ENCODE measurements at regions of chr4 and their contacts with region 1.

Region 1: GRCh38 chr4:173420324-173420752 is 21.4 kb upstream of the SCRG1 start:
- DNase-seq: no peak
- H3K4me3 ChIP-seq: no peak overlapping the region
- H3K27ac ChIP-seq: no peak overlapping the region
- H3K4me1 ChIP-seq: no peaks in the 10 kb centered on the region
- H3K27me3 ChIP-seq: no peaks in the 10 kb centered on the region
- CTCF ChIP-seq: peak; percentile 44

Region 2: DNA sequence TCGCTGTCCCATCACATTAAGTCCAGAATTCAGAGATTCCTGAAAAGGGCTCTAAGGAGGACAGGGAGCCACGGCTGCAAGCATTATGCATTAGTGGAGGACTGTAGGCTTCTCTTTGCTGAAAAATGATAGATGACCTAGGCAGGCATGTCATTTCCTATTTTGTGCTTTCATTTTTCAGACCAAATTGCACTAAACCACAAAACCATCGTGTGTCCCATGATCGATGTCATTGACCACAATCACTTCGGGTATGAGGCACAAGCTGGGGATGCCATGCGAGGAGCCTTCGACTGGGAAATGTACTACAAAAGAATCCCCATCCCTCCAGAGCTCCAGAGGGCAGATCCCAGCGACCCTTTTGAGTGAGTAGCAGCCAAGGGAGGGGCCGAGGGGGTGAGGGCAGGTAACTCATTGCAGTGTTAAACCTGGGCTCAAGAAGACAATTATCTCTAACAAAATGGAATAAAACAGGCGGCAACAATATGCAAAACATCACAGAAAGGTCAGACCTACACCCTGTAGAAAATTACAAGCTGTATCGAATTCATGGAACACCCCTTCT is 606.9 kb before region 1 on chr4:
- intact Hi-C with region 1: no loop called
- DNase-seq: no peak
- H3K4me3 ChIP-seq: no peak overlapping the region
- H3K27ac ChIP-seq: no peak overlapping the region
- H3K4me1 ChIP-seq: no peaks in the 10 kb centered on the region
- H3K27me3 ChIP-seq: no peaks in the 10 kb centered on the region
- CTCF ChIP-seq: no peak

Region 3: DNA sequence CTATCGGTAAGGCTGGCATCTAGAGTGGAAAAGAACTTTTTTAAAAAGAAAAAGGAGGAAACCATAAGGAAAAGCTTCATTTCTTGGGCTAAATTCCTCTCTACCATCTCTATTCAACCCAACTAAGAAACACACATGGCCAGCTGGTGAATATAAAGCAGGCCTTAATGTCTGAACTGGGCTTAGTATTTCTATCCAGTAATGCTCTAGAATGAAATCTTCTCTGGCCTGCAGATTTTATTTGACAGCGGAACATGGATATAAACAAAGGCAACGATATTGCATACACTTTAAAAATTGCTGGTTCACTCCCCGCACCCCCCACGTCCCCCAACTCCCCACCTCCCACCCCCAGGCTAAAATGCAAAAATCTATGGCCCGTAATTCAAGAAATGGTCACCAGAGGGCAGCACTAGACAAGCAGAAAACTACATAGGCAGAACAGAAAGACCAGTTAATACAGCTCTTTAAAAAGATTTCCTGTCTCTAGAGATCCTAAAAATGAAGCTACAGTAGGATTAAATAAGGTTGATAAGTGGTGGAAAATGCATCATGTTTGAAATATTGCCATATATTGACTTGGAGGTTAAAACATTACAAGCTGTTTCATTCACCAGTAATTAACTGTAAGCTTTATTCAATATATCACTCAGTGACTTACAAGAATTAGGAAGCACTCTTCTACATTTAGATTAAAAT is 407.0 kb before region 1 on chr4:
- intact Hi-C with region 1: loop called (anchors 5 kb)
- DNase-seq: peak; percentile 60
- H3K4me3 ChIP-seq: no peak overlapping the region
- H3K27ac ChIP-seq: no peak overlapping the region
- H3K4me1 ChIP-seq: no peaks in the 10 kb centered on the region
- H3K27me3 ChIP-seq: no peaks in the 10 kb centered on the region
- CTCF ChIP-seq: peak; percentile 75

Region 4: DNA sequence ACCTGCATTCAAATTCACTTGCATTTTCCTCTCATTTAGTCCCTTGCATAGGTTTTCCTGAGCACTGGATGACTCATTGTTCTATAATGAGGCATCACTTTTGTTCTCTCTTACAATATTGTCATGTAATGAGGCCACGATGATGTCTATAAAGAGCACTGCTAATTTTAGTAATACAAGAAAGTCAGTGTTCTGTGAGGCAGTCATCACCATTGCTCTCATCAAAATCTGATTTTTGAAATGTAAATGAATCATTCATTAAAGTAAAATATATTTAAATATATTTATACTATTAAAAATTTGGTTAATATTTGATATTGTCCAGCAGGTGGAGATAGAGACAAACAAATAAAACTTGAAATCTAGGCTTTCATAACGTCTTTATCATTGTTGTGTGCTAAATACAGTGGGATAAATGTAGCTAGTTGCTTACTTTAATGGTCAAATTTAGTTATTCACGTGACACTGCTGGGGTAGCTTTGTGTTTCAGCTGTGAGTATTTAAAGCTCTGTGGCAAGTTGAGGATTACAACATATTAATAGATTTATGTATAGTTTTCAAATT is 101.6 kb before region 1 on chr4:
- intact Hi-C with region 1: loop called (anchors 5 kb)
- DNase-seq: no peak
- H3K4me3 ChIP-seq: no peak overlapping the region
- H3K27ac ChIP-seq: no peak overlapping the region
- H3K4me1 ChIP-seq: no peaks in the 10 kb centered on the region
- H3K27me3 ChIP-seq: no peaks in the 10 kb centered on the region
- CTCF ChIP-seq: peak; percentile 21

Region 5: GRCh38 chr4:173334773-173335752 is 85.3 kb before region 1 on chr4:
- intact Hi-C with region 1: no loop called
- DNase-seq: peak; percentile 87
- H3K4me3 ChIP-seq: peak overlapping the region; percentile 91
- H3K27ac ChIP-seq: peak overlapping the region; percentile 100
- H3K4me1 ChIP-seq: no peaks in the 10 kb centered on the region
- H3K27me3 ChIP-seq: no peaks in the 10 kb centered on the region
- CTCF ChIP-seq: no peak

Region 6: DNA sequence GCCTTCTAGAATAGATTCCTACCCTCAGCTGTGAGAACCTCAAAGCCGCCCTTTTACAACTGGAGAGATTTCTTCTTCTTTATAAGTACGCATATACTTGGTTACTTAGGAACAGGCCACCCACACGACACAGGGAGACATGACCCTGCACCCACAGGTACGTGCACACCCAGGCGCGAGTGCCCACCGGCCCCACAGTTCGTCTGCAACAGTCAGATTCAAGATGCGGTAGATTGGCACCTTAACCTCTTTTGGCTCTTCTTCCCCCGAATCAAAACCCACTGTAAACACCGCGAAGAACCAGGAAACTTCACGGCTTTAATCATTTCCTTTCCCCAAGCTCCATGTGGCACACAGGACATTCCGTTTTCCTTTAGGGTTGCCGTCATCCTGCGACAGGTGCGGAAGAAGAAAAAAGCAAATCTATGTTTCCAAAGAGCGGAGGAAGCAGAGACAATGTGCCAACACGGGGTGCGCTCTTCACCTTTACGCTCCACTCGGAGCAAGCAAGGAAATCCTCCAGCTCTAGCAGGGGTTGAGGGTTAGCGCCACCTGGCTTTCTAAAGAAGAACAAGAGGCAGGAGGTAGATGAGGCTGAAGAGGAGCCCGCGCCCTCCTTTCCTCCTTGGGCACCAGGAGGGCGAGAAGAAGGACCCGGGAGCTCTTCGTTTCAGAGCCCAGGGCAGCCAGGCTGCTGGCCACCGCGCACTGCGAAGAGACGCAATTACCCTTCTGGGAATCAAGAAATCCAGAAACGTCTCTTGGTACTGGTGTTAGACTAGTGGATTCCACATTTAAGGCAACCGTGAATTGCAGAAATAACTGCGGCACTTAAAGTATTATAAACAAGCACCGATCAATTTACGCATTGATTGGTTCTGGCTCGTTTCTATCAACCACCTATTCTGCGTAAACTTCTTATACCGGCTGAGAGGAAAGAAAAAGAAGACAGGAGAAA is 74.0 kb after region 1 on chr4:
- intact Hi-C with region 1: loop called (anchors 5 kb)
- DNase-seq: peak; percentile 78
- H3K4me3 ChIP-seq: peak overlapping the region; percentile 21
- H3K27ac ChIP-seq: no peak overlapping the region
- H3K4me1 ChIP-seq: no peaks in the 10 kb centered on the region
- H3K27me3 ChIP-seq: no peaks in the 10 kb centered on the region
- CTCF ChIP-seq: peak; percentile 72

Region 7: GRCh38 chr4:173752610-173753230 is 332.4 kb after region 1 on chr4:
- intact Hi-C with region 1: loop called (anchors 10 kb)
- DNase-seq: peak; percentile 43
- H3K4me3 ChIP-seq: no peak overlapping the region
- H3K27ac ChIP-seq: no peak overlapping the region
- H3K4me1 ChIP-seq: no peaks in the 10 kb centered on the region
- H3K27me3 ChIP-seq: no peaks in the 10 kb centered on the region
- CTCF ChIP-seq: no peak